ENCODE measurements at regions of chr12 and their contacts with region 1.

Region 1: GRCh38 chr12:41277116-41277945 is 89.2 kb downstream of the PDZRN4 start:
- DNase-seq: peak; percentile 71
- H3K4me3 ChIP-seq: no peak overlapping the region
- H3K27ac ChIP-seq: no peak overlapping the region
- H3K4me1 ChIP-seq: peaks cover 14% of the 10 kb centered on the region
- H3K27me3 ChIP-seq: no peaks in the 10 kb centered on the region
- CTCF ChIP-seq: peak; percentile 72

Region 2: DNA sequence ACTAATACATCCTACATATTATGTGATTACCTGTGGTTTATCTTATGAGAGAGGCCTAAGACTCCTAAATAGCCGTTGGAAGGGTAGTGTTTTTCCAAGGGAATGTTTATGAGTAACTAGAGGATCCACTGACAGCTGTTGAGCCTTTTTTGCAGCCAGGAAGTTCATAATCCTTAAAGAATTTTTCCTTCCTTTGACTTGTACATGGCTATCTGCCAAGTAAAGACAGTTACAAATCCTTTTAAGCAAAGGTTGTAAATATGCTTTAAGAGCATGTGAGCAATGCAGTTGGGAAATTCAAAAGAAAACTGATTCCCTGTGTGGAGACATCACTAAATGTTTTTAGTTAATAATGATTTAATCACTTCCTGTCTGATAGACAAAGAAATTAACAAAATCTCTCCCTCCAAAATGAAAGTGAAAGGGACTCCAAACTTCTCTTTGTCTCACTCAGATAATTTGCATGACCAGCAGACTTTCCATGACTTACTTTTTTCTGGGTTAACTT is 244.6 kb after region 1 on chr12:
- CTCF ChIA-PET with region 1: no interaction called
- POLR2A ChIA-PET with region 1: no interaction called
- intact Hi-C with region 1: loop called (anchors 5 kb)
- DNase-seq: peak; percentile 95
- H3K4me3 ChIP-seq: peak overlapping the region; percentile 15
- H3K27ac ChIP-seq: peak overlapping the region; percentile 57
- H3K4me1 ChIP-seq: peaks cover 48% of the 10 kb centered on the region
- H3K27me3 ChIP-seq: no peaks in the 10 kb centered on the region
- CTCF ChIP-seq: no peak

Region 3: DNA sequence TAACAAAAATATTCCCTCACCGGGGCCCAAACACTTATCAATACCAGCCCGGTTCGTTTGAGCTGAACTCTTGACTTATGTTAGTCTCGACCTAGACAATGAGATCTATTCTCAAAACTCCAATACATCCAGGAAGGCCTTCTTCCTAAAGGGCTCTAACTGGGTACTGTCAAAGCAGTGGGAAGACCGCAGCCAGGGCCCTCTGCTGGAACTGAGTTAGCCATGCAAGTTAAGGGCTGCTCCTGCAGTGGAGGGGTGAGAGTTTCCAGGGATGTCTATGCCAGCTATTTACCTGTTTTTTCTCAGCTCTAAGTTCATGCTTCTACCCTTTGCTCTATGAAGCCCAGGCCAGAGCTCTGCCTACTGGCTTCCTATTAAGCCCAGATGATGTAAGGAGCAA is 518.6 kb after region 1 on chr12:
- CTCF ChIA-PET with region 1: no interaction called
- POLR2A ChIA-PET with region 1: no interaction called
- intact Hi-C with region 1: loop called (anchors 5 kb)
- DNase-seq: peak; percentile 52
- H3K4me3 ChIP-seq: no peak overlapping the region
- H3K27ac ChIP-seq: peak overlapping the region; percentile 82
- H3K4me1 ChIP-seq: peaks cover 42% of the 10 kb centered on the region
- H3K27me3 ChIP-seq: no peaks in the 10 kb centered on the region
- CTCF ChIP-seq: peak; percentile 54

Region 4: DNA sequence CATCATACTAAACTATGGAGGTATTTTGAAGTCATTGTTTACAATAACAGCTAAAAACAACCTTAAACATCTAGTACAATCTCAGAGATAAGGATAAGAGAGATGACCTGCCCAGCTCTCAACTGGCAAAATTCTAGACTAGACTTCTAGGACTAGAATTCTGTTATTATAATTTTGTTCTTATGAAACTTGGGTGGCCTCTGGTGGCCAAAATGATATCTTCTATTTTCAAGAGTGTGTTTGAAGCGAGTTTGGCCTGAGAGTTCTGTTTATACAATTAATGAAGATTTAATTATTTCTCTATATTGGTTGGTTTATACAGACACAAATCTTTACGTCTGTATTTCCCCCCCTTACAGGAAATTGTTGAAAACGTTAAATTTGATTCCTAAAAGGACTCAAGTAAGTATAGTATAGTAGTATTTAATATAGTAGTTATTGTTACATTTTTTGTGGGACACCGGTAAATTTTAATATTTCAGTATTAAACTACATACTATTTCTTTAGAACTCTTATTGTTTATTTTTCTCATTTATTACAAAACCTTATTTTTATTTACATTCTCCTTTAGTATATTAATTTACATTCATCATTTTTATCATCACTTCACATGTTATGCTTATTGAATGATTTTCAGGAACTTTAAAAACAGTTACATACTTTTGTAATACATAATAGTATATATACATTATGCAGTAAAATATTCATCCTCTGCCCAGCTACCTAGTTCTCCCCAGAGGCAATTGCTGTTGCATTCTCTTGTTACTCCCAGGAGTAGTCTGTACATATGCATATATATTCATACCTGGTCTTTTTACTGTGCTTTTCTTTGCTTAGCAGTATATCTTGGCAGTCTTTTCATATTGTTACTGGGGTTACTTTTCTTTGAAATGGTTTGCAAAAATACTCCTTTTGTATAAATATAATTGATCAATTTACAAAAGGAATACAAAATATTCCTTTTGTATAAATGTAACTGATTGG is 1055.3 kb after region 1 on chr12:
- CTCF ChIA-PET with region 1: no interaction called
- POLR2A ChIA-PET with region 1: no interaction called
- intact Hi-C with region 1: loop called (anchors 10 kb)
- DNase-seq: peak; percentile 70
- H3K4me3 ChIP-seq: no peak overlapping the region
- H3K27ac ChIP-seq: no peak overlapping the region
- H3K4me1 ChIP-seq: peaks cover 6% of the 10 kb centered on the region
- H3K27me3 ChIP-seq: no peaks in the 10 kb centered on the region
- CTCF ChIP-seq: peak; percentile 70